AG04450 (cell line): ENCODE measurements at regions of chr7 and their contacts with region 1.

Region 1: DNA sequence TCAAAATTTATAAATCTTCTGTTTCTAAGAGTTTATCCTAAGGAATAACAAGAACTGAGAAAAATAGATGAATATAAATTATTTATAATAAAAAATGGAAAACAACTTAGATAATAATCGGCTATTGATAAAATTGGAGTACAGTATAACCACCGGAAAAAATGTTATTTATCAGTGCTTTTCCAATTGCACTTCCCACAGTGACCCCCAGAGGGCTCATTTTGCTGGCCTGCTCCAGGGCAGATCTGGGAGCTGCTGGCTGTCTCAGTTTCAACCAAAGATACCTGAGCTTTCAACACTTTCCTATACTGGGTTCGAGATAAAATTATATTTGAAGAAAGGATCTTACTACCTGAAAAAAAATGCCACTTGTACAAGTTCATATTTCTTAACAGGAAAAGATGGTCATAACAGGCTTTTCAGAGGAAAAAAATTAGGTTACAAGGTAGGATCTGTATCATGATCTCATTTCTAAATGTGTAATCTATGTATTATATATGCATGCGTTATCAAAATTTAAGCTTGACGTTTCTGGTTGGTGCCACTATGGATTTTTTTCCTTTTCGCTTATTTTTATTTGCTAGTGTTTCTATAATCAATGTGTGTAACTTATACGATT is 165.7 kb downstream of the NPSR1 start:
- DNase-seq: peak; percentile 8
- H3K4me3 ChIP-seq: no peak overlapping the region
- H3K27ac ChIP-seq: no peak overlapping the region
- H3K27me3 ChIP-seq: no peaks in the 10 kb centered on the region
- CTCF ChIP-seq: peak; percentile 95

Region 2: GRCh38 chr7:34806831-34807230 is 16.9 kb before region 1 on chr7:
- CTCF ChIA-PET with region 1: no interaction called
- POLR2A ChIA-PET with region 1: no interaction called
- DNase-seq: no peak
- H3K4me3 ChIP-seq: no peak overlapping the region
- H3K27ac ChIP-seq: no peak overlapping the region
- H3K27me3 ChIP-seq: no peaks in the 10 kb centered on the region
- CTCF ChIP-seq: no peak

Region 3: GRCh38 chr7:34952822-34953221 is 129.1 kb after region 1 on chr7:
- CTCF ChIA-PET with region 1: no interaction called
- POLR2A ChIA-PET with region 1: no interaction called
- DNase-seq: no peak
- H3K4me3 ChIP-seq: no peak overlapping the region
- H3K27ac ChIP-seq: no peak overlapping the region
- H3K27me3 ChIP-seq: no peaks in the 10 kb centered on the region
- CTCF ChIP-seq: no peak

Region 4: DNA sequence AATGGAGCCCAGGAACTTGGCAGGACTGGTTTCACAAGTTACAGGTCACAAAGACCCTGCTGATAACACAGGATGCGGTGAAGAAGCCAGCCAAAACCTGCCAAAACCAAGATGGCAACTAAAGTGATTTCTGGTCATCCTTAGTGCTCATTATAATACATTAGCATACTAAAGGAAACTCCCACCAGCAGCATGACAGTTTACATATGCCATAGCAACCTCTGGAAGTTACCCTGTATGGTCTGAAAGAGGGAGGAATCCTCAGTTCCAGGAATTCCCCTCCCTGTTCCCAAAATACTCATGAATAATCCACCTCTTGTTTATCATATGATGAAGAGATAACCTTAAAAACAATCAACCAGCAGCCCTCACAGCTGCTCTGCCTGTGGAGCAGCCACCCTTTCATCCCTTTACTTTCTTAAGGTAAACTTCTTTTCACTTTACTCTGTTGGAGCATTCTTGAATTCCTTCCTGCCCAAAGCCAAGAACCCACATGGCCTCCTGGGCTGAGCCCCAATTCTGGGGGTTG is 191.6 kb after region 1 on chr7:
- CTCF ChIA-PET with region 1: no interaction called
- POLR2A ChIA-PET with region 1: no interaction called
- DNase-seq: no peak
- H3K4me3 ChIP-seq: no peak overlapping the region
- H3K27ac ChIP-seq: no peak overlapping the region
- H3K27me3 ChIP-seq: no peaks in the 10 kb centered on the region
- CTCF ChIP-seq: no peak

Region 5: DNA sequence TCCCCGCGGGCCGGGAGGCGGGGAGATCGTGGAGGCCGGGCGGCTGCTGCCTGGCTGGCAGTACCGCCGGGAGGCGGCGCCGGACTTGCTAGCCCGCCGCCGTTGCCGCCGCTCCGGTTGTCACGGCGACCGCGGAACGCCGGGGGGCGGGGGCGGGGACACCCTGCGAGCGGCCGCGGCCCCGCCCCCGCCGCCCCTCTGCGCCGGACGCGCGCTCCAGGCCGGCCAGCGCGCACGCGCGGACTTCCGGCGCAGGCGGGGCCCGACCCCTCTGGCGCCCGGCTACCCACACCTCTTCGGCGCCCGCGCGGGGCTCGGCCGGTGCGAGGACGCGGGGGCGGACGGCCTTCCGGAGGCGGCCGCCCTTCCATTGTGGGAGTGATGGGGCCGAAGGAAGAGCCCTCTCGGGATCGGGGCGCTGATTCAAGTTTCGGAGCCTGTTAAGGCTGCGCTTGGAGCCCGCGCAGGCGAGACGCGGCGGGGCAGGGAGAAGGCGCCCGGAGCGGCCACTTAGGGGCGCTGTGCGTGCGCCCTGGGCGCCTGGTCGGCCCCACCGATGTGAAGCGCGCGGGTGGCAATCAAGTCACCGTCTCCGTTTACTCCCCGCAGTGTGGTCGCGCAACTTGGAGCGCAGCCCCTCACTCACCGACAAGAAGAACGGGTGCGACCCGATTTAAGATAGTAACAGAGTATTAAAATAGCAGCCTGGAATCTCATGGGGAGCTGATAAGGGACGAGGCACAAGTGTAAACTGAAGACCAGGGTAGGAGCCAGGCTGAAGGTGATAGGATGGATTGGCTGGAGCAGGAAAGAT is 214.0 kb after region 1 on chr7:
- CTCF ChIA-PET with region 1: interaction called, 14 read pairs
- POLR2A ChIA-PET with region 1: no interaction called
- DNase-seq: peak; percentile 81
- H3K4me3 ChIP-seq: peak overlapping the region; percentile 68
- H3K27ac ChIP-seq: peak overlapping the region; percentile 21
- H3K27me3 ChIP-seq: peaks cover 6% of the 10 kb centered on the region
- CTCF ChIP-seq: peak; percentile 79